ENCODE measurements at regions of chr2 and their contacts with region 1.

Region 1: DNA sequence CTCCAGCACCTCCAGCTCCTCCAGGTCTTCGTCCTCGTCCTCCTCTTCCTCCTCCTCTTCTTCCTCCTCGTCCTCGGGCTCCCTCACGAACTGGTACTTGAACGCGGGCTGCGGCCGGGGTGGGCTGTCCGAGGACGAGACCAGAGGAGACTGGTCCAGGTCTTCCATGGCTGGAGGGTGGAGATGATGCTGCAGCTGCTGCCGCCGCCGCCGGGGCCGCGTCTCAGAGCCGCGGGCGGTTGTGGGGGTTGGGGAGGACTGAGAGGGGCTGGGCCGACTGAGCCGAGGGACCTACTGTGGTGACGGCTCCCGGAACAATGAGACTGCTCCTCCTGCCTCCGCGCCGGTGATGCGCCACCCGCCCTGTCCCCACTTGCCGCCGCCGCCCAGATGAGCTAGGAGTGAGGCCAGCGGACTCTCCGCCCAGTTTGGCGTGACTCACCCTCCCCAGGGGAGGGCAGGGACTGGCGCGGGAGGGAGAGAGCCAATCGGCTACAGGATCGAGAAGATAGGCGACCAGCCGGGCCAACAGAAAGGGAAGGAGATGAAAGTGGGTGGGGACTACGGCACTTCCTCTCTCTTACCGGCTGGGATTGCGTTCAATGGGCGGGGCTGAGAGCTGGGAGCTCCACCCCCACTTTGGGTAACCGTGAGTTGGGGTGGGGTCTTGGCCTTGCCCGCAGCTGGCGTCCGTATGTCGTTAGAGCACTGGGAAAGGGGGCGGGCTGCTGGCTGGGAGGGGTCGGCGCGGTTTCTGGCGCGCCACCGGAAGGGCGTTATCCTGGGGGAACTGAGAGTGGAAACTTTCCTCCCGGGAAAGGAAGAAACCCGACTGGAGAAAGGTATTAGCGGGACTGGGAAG is at the start of gene RTN4:
- DNase-seq: peak; percentile 98 to 99
- ATAC-seq: peak; percentile 93 to 98 (median 94)
- H3K4me3 ChIP-seq: peak within 1 kb of the TSS; percentile 73 to 91 (median 84)
- H3K27ac ChIP-seq: peak within 1 kb of the TSS; percentile 90 to 99 (median 98)
- H3K4me1 ChIP-seq: peaks cover 0 to 52% (median 38%) of the 10 kb centered on the region in 9 donors
- H3K27me3 ChIP-seq: no peaks in the 10 kb centered on the region
- CTCF ChIP-seq: peak in 3 of 9 donors; percentile 5 to 30 (median 14)
- total RNA-seq, gene RTN4: 40.6 to 163 (median 95.3) TPM

Region 2: GRCh38 chr2:55014962-55015939 is 35.1 kb before region 1 on chr2:
- intact Hi-C with region 1: loop called in 3 of 10 experiments (anchors 5 kb)
- DNase-seq: peak in 1 of 2 donors; percentile 48
- ATAC-seq: peak in 7 of 8 donors; percentile 64 to 87 (median 79)
- H3K4me3 ChIP-seq: no peak overlapping the region
- H3K27ac ChIP-seq: no peak overlapping the region
- H3K4me1 ChIP-seq: peaks cover 0 to 95% (median 52%) of the 10 kb centered on the region in 9 donors
- H3K27me3 ChIP-seq: no peaks in the 10 kb centered on the region
- CTCF ChIP-seq: peak; percentile 30 to 79 (median 70)

Region 3: DNA sequence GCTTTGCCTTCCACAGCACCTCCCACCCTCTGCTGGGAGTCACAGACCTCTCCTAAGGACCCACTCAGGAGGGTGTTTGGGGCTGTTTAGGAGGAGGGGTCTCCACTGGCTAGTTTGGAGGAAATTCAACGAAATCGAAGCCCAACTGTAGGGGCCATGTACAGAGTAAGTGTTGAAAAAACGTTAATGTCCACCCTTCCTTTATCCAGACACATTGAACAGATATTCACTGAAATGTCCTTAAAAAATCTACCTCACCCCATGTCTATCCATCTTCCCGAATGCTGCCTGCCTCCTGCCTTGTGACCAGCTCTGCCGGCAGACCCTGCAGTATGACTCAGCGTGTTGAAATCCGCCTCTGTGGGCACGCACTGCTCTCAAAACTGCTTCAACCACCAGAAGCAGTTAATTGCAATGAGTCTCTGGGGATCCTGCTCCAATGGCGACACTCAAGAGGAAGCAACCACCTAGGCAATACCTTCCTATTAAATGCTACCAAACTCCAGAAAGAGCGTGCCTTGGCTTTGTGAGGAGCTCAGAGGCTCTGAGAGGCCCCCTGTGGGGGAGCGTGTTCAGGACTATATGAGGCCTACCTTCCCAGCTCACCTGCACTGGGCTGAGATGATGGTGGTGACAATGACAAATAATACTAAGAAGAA is 61.3 kb after region 1 on chr2:
- intact Hi-C with region 1: loop called in 5 of 10 experiments (anchors 2 to 10 kb)
- DNase-seq: peak; percentile 31 to 42
- ATAC-seq: peak; percentile 40 to 77 (median 64)
- H3K4me3 ChIP-seq: peak overlapping the region in 1 of 10 donors; percentile 25
- H3K27ac ChIP-seq: peak overlapping the region; percentile 59 to 94 (median 78)
- H3K4me1 ChIP-seq: peaks cover 11 to 52% (median 27%) of the 10 kb centered on the region in 9 donors
- H3K27me3 ChIP-seq: no peaks in the 10 kb centered on the region
- CTCF ChIP-seq: no peak

Region 4: DNA sequence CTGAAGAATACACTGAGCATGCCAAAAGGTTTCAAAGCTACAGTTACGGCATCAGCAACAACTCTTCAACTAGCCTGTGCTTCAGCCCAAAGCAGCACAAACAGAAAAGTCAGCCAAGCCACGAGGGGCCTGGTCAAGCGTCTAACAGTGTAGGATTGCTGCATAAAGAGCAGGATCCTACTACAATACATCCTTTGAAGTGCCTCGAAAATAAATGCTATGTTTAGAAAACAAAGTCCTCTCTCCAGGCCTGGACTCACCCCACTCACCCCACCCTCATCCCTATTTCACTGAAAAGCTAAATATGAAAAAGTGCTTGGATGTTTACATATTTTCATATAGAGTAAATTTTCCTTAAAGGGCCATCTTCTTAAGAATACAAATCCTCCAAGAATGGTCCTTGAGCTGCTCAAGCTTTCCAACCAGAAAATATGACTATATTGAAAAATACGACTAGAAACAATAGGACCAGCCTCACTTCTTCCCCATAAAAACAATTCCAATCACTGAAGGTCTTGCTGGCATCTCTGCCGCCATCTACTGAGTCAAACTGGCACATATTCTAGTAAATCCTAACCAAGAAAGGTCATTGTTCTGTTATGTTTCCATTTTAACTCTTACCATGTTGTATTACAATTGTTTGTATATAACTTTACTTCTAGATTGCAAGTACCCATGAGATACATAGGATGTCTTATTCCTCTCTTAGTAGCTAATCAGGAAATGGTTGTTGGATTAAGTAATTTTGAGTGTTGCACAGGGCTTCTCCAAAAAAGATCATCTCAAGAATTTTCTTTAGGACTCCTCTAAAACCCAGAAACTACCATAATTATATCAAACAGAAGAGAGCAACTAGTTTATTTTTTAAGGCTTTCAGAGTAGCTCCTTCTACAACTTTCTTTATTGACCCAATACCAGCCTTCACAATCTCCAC is 118.1 kb after region 1 on chr2:
- intact Hi-C with region 1: loop called in 8 of 10 experiments (anchors 2 to 10 kb)
- DNase-seq: peak in 1 of 2 donors; percentile 52
- ATAC-seq: peak; percentile 63 to 80 (median 72)
- H3K4me3 ChIP-seq: no peak overlapping the region
- H3K27ac ChIP-seq: peak overlapping the region in 6 of 10 donors; percentile 5 to 53 (median 27)
- H3K4me1 ChIP-seq: peaks cover 0 to 39% (median 15%) of the 10 kb centered on the region in 9 donors
- H3K27me3 ChIP-seq: no peaks in the 10 kb centered on the region
- CTCF ChIP-seq: peak; percentile 50 to 82 (median 76)